ENCODE measurements at regions of chr6 and their contacts with region 1.

Region 1: GRCh38 chr6:150068720-150069648 is at the start of gene ULBP3:
- DNase-seq: peak; percentile 97
- H3K4me3 ChIP-seq: peak within 1 kb of the TSS; percentile 72 to 88 (median 85)
- H3K27ac ChIP-seq: peak within 1 kb of the TSS; percentile 54
- H3K4me1 ChIP-seq: peaks cover 4% of the 10 kb centered on the region
- H3K27me3 ChIP-seq: peaks cover 0 to under 1% of the 10 kb centered on the region in 2 experiments
- CTCF ChIP-seq: peak; percentile 42 to 75
- POLR2A ChIP-seq: peak; percentile 92
- total RNA-seq, gene ULBP3: 12.8 and 13.8 TPM in 2 replicates

Region 2: DNA sequence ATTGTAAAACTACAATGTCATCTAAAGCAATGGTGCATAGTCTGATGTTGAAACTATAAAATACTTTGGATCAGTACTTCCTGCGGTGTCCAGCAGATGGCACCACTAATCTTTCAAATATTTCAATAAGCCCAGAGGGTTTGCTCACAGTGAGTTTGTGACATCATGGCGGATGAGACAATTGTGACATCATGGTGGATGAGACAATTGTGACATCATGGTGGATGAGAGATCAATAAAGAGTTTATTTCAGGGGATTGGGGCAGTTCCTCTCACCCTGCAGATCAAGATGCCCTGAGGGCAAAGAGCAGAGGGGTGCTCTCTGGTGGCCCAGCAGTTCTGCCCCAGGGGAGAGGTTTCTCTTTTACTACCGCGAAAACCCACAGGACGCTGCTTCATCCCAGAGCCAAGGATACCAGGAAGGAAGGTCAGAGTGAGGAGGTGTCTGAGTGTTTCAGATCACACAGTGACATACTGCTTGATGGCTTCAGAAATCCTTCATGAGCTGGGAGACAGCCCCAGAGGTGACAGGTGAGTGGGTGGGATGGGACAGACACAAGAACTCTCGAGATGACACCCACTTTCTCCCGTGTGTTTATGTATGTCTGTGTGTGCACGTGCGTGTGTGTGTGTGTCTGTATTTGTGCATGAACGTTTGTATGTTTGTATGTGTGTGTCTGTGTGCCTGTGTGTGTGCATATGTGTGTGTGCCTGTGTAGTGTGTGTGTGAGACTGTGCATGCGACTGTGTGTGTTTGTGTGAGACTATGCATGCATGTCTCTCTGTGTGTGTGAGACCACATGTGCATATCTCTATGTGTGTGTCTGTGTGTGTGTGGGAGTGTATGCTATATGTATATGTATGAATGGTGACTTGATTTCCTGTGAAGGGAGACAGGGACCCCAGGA is 134.5 kb before region 1 on chr6:
- CTCF ChIA-PET with region 1: no interaction called
- POLR2A ChIA-PET with region 1: no interaction called
- dilution Hi-C with region 1: no loop called
- intact Hi-C with region 1: loop called (anchors 1 kb)
- DNase-seq: peak; percentile 74
- H3K4me3 ChIP-seq: no peak overlapping the region
- H3K27ac ChIP-seq: no peak overlapping the region
- H3K4me1 ChIP-seq: peaks cover 10% of the 10 kb centered on the region
- H3K27me3 ChIP-seq: peaks cover 63 to 75% of the 10 kb centered on the region in 2 experiments
- CTCF ChIP-seq: peak; percentile 54 to 64
- POLR2A ChIP-seq: no peak

Region 3: DNA sequence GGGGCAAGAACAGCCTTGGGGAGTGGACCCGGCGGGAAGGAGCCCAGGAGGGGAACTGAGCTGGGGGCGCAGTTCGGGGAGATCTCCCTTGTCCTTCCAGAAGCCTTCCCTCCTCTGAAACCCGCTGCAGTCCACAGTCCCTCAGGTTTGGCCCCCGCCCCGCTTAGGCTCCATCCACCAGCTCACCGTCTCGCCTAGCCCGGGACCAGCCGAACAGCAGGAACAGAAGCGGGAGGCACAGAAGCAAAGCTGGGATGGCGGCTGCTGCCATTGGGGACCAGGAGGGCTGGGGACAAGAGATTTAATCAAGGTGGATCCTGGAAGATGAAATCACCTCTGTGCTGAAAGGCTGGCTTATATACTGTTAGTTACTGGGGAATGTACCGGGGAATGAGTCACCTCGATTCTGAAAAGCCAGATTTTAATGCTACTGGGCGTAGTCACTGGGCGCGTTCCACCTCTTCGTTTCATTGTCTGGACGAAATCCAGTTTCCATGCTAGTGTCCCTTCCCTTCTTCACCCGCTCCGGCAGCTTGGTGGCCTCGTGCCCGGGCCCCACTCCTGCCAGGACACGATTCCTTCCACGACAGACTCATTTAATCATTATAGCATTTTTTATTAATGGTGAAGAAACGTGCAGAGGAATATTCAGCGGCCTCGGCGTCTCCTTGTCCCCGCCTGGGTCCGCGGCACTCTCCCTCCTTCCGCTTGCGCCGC is 43.6 kb before region 1 on chr6 and contains the start of gene RAET1L:
- CTCF ChIA-PET with region 1: interaction called, 3 read pairs
- POLR2A ChIA-PET with region 1: no interaction called
- dilution Hi-C with region 1: no loop called
- intact Hi-C with region 1: loop called (anchors 2 kb)
- DNase-seq: peak; percentile 35
- H3K4me3 ChIP-seq: peak within 1 kb of the TSS in 2 of 3 experiments; percentile 8 to 27
- H3K27ac ChIP-seq: no peak within 1 kb of the TSS
- H3K4me1 ChIP-seq: peaks cover 9% of the 10 kb centered on the region
- H3K27me3 ChIP-seq: peaks cover 28 to 34% of the 10 kb centered on the region in 2 experiments
- CTCF ChIP-seq: no peak
- POLR2A ChIP-seq: no peak
- total RNA-seq, gene RAET1L: not detected in 2 replicates

Region 4: GRCh38 chr6:150079604-150080003 is 10.6 kb after region 1 on chr6:
- CTCF ChIA-PET with region 1: interaction called, 46 read pairs
- POLR2A ChIA-PET with region 1: no interaction called
- dilution Hi-C with region 1: no loop called
- intact Hi-C with region 1: no loop called
- DNase-seq: no peak
- H3K4me3 ChIP-seq: no peak overlapping the region
- H3K27ac ChIP-seq: no peak overlapping the region
- H3K4me1 ChIP-seq: no peaks in the 10 kb centered on the region
- H3K27me3 ChIP-seq: peaks cover 11 to 12% of the 10 kb centered on the region in 2 experiments
- CTCF ChIP-seq: no peak
- POLR2A ChIP-seq: no peak

Region 5: DNA sequence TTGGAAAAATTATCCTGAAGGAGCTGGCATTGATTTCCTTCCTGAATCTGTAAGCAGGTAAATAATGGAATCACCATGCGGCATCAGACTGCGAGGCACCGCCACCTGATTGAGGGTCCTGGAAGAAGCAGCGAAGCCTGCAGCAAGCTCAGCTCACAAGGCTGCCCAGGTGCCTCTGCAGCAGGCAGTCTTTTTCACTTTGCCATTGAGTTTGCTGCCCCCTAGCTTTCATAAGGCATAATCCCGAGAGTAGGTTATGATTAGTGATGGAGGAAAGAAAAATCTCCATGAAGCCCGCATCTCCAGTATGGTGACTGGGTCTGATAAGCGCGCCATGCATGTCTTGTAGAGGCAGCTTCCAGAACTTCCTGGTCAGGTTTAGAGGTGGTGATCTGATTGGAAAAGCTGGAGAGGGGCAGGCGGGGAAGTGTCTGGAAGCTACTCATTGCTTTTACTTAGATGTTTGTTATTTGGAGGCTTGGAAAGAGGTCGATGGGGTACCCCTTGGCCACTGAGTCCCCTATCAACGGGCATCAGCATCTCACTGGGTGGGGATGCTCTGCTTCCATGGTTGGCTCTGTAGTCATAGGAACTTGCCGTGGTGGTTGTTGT is 326.5 kb after region 1 on chr6:
- CTCF ChIA-PET with region 1: interaction called, 37 read pairs
- POLR2A ChIA-PET with region 1: no interaction called
- dilution Hi-C with region 1: no loop called
- intact Hi-C with region 1: no loop called
- DNase-seq: peak; percentile 50
- H3K4me3 ChIP-seq: no peak overlapping the region
- H3K27ac ChIP-seq: no peak overlapping the region
- H3K4me1 ChIP-seq: no peaks in the 10 kb centered on the region
- H3K27me3 ChIP-seq: peaks cover 5 to 11% of the 10 kb centered on the region in 2 experiments
- CTCF ChIP-seq: peak; percentile 59 to 70
- POLR2A ChIP-seq: no peak

Measured in endothelial cell of umbilical vein (primary cell).